ENCODE measurements at regions of chr16 and their contacts with region 1.

Region 1: DNA sequence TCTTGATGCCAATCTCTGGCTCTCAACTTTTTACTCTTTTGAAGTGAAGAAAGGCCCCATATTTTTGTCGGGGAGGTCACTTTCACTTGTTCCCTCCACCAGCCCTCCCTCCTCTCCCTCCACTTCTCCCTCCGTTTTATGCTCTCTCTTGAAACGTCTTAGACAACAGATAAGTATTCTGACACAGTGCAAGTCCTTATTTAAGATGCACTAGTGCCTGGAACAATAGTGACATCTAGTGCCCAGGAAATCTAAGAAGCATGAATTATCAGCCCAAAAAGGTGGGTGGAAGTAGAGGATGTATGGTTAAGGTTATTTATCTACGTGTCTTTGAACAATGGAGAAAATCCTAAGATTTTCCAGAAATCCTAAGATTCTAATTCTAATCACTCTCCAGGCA is 17.9 kb downstream of the PSME3IP1 start:
- DNase-seq: no peak
- H3K4me3 ChIP-seq: no peak overlapping the region
- H3K27ac ChIP-seq: no peak overlapping the region
- H3K4me1 ChIP-seq: no peaks in the 10 kb centered on the region
- H3K27me3 ChIP-seq: no peaks in the 10 kb centered on the region
- CTCF ChIP-seq: peak in 2 of 3 donors; percentile 34 to 39
- EP300 ChIP-seq: no peak
- POLR2A ChIP-seq: no peak

Region 2: GRCh38 chr16:57029161-57030160 is 138.5 kb before region 1 on chr16:
- intact Hi-C with region 1: no loop called
- DNase-seq: no peak
- H3K4me3 ChIP-seq: no peak overlapping the region
- H3K27ac ChIP-seq: no peak overlapping the region
- H3K4me1 ChIP-seq: no peaks in the 10 kb centered on the region
- H3K27me3 ChIP-seq: no peaks in the 10 kb centered on the region
- CTCF ChIP-seq: no peak
- EP300 ChIP-seq: no peak
- POLR2A ChIP-seq: no peak

Region 3: GRCh38 chr16:57089406-57089805 is 78.5 kb before region 1 on chr16:
- intact Hi-C with region 1: loop called in 3 of 4 experiments (anchors 5 to 10 kb)
- DNase-seq: no peak
- H3K4me3 ChIP-seq: no peak overlapping the region
- H3K27ac ChIP-seq: no peak overlapping the region
- H3K4me1 ChIP-seq: peaks cover 3% of the 10 kb centered on the region
- H3K27me3 ChIP-seq: no peaks in the 10 kb centered on the region
- CTCF ChIP-seq: no peak
- EP300 ChIP-seq: no peak
- POLR2A ChIP-seq: no peak

Region 4: DNA sequence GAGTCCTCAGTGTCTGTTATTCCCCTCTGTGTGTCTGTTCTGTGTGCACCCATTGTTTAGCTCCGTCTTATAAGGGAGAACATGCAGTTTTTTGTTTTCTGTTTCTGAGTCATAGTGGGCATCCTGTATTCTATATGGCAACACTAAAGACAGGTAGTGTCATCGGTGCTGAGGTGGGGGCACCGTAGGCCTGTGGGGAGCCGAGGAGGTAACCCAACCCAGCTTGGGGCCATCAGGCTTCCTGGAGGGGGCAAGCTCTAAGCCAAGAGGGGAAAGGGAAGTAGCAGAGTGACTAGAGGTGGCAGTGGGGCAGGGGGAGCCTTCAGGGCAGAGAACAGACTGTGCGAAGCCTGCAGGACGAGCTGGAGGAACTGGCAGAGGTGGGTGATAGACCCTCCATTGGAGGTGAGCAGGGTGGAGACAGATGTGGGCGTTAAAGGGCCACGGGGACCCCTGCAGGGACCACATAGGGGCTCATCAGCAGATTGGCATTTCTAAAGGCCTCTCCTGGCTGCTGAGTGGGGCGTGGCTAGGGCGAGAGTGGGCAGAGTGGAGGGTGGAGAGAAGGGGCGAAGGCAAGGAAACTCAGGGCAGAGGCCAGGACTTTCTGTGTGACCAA is 39.1 kb before region 1 on chr16:
- intact Hi-C with region 1: no loop called
- DNase-seq: no peak
- H3K4me3 ChIP-seq: no peak overlapping the region
- H3K27ac ChIP-seq: no peak overlapping the region
- H3K4me1 ChIP-seq: no peaks in the 10 kb centered on the region
- H3K27me3 ChIP-seq: no peaks in the 10 kb centered on the region
- CTCF ChIP-seq: no peak
- EP300 ChIP-seq: no peak
- POLR2A ChIP-seq: no peak

Measured in ovary (tissue), 10 donors.